IMR-90 (cell line): ENCODE measurements at regions of chr13 and their contacts with region 1.

Region 1: GRCh38 chr13:97855570-97856303 is 97.7 kb upstream of the IPO5 start:
- DNase-seq: peak; percentile 86
- ATAC-seq: peak; percentile 88
- H3K4me3 ChIP-seq: no peak overlapping the region
- H3K27ac ChIP-seq: no peak overlapping the region
- H3K4me1 ChIP-seq: peaks cover 6% of the 10 kb centered on the region
- H3K27me3 ChIP-seq: no peaks in the 10 kb centered on the region
- CTCF ChIP-seq: peak; percentile 89
- POLR2A ChIP-seq: peak; percentile 39; the same call in 1 of the 2 replicates
- RAD21 ChIP-seq: peak; percentile 99

Region 2: DNA sequence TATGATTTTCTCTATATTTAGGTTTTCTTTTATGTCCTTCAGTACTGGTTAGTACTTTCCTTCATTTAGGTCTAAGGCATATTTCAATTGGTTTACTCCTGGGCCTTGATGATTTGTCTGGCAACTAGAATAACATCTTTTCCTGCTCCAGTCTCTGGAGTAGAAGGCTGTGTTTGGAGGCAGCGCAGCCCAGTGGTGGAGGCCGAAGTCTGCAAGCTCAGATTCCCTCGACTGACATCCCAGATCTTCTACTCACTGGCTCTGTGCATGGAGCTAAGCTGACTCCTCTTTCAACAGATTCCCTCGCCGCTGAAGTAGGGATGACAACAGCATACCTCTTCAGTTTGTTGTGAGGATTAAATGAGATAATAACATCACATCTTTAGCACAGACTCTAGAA is 280.8 kb before region 1 on chr13:
- CTCF ChIA-PET with region 1: no interaction called
- POLR2A ChIA-PET with region 1: no interaction called
- dilution Hi-C with region 1: no loop called
- in situ Hi-C with region 1: no loop called
- intact Hi-C with region 1: no loop called
- DNase-seq: peak; percentile 52
- ATAC-seq: peak; percentile 80
- H3K4me3 ChIP-seq: no peak overlapping the region
- H3K27ac ChIP-seq: no peak overlapping the region
- H3K4me1 ChIP-seq: peaks cover 2% of the 10 kb centered on the region; the same call in 1 of the 2 replicates
- H3K27me3 ChIP-seq: peaks cover 2% of the 10 kb centered on the region; the same call in 1 of the 2 replicates
- CTCF ChIP-seq: peak; percentile 55
- POLR2A ChIP-seq: no peak
- RAD21 ChIP-seq: peak; percentile 64

Region 3: GRCh38 chr13:97786510-97786909 is 69.2 kb before region 1 on chr13:
- CTCF ChIA-PET with region 1: no interaction called
- POLR2A ChIA-PET with region 1: no interaction called
- dilution Hi-C with region 1: no loop called
- in situ Hi-C with region 1: no loop called
- intact Hi-C with region 1: no loop called
- DNase-seq: no peak
- ATAC-seq: no peak
- H3K4me3 ChIP-seq: no peak overlapping the region
- H3K27ac ChIP-seq: no peak overlapping the region
- H3K4me1 ChIP-seq: no peaks in the 10 kb centered on the region
- H3K27me3 ChIP-seq: peaks cover 4% of the 10 kb centered on the region; the same call in 1 of the 2 replicates
- CTCF ChIP-seq: no peak
- POLR2A ChIP-seq: no peak
- RAD21 ChIP-seq: no peak

Region 4: GRCh38 chr13:97975848-97976609 is 120.3 kb after region 1 on chr13:
- CTCF ChIA-PET with region 1: interaction called, 4 read pairs
- POLR2A ChIA-PET with region 1: no interaction called
- dilution Hi-C with region 1: no loop called
- in situ Hi-C with region 1: no loop called
- intact Hi-C with region 1: loop called (anchors 1 kb)
- DNase-seq: peak; percentile 79
- ATAC-seq: peak; percentile 96
- H3K4me3 ChIP-seq: peak overlapping the region; percentile 98
- H3K27ac ChIP-seq: peak overlapping the region; percentile 64
- H3K4me1 ChIP-seq: peaks cover 4% of the 10 kb centered on the region; the same call in 1 of the 2 replicates
- H3K27me3 ChIP-seq: no peaks in the 10 kb centered on the region
- CTCF ChIP-seq: no peak
- POLR2A ChIP-seq: peak; percentile 85
- RAD21 ChIP-seq: no peak

Region 5: DNA sequence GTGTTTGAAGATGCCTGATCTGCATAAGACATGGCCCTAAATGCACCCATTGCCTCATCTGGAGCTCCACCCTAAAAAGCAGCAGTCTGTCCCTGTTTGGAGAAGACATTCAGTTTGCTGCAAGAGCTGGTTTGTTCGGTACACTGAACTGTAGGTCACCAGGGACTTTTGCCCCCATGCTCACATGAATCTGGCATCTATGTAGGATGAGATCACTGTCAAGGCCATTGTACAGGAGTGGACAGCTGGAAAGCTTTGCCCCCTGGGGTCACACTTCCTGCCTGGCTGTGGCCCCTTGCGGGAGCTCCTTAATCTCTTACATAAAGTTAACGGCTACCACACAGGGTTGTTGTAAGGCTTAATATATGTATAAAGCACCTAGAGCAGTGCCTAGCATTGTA is 170.7 kb after region 1 on chr13:
- CTCF ChIA-PET with region 1: no interaction called
- POLR2A ChIA-PET with region 1: no interaction called
- dilution Hi-C with region 1: no loop called
- in situ Hi-C with region 1: no loop called
- intact Hi-C with region 1: loop called (anchors 5 kb)
- DNase-seq: peak; percentile 40
- ATAC-seq: peak; percentile 8; the same call in 1 of the 2 replicates
- H3K4me3 ChIP-seq: no peak overlapping the region
- H3K27ac ChIP-seq: no peak overlapping the region
- H3K4me1 ChIP-seq: peaks cover 11% of the 10 kb centered on the region
- H3K27me3 ChIP-seq: no peaks in the 10 kb centered on the region
- CTCF ChIP-seq: no peak
- POLR2A ChIP-seq: no peak
- RAD21 ChIP-seq: no peak

Region 6: DNA sequence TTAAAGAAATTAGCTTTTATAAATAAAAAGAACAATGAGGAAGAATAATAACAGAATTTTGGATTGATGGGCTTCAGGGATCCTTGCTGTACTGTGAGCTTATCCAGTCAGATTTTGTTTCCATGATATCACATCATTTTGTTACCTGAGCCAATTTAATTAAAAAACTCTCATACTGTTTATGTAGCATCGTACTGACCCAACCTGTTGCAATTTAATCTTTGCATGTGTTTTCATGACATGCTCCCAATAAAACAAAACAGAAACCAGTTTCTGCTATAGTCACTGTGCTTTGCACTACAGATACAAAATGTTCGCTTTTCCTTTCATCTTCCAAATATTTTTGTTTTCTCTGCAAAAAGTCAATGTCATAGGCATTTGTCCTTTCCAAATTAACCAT is 431.1 kb after region 1 on chr13:
- CTCF ChIA-PET with region 1: no interaction called
- POLR2A ChIA-PET with region 1: no interaction called
- dilution Hi-C with region 1: no loop called
- in situ Hi-C with region 1: no loop called
- intact Hi-C with region 1: no loop called
- DNase-seq: no peak
- ATAC-seq: no peak
- H3K4me3 ChIP-seq: no peak overlapping the region
- H3K27ac ChIP-seq: no peak overlapping the region
- H3K4me1 ChIP-seq: peaks cover 6% of the 10 kb centered on the region; the same call in 1 of the 2 replicates
- H3K27me3 ChIP-seq: no peaks in the 10 kb centered on the region
- CTCF ChIP-seq: no peak
- POLR2A ChIP-seq: no peak
- RAD21 ChIP-seq: no peak

Region 7: DNA sequence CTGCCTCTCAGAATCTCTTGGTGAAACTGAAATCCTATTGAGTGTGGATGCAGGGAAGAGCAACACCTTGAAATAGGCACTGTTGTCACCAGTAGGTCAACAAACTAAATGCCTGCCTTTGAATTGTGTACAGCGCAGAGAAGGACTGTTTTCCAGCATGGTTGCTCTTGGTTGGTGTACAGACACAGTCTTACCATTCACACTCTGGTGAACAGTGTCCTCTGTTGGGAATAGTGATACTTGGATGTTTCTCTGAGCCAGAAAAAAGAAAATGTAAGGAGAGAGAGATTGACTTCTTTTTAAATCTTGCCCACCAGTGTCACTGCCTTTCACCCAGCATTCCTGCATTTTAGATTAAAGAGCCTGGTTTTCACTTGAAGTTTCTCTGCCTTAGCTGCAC is 541.5 kb after region 1 on chr13:
- CTCF ChIA-PET with region 1: no interaction called
- POLR2A ChIA-PET with region 1: no interaction called
- dilution Hi-C with region 1: no loop called
- in situ Hi-C with region 1: no loop called
- intact Hi-C with region 1: loop called (anchors 10 kb)
- DNase-seq: peak; percentile 40
- ATAC-seq: peak; percentile 46; the same call in 1 of the 2 replicates
- H3K4me3 ChIP-seq: no peak overlapping the region
- H3K27ac ChIP-seq: no peak overlapping the region
- H3K4me1 ChIP-seq: peaks cover 6% of the 10 kb centered on the region
- H3K27me3 ChIP-seq: no peaks in the 10 kb centered on the region
- CTCF ChIP-seq: peak; percentile 43
- POLR2A ChIP-seq: no peak
- RAD21 ChIP-seq: peak; percentile 51

Region 8: DNA sequence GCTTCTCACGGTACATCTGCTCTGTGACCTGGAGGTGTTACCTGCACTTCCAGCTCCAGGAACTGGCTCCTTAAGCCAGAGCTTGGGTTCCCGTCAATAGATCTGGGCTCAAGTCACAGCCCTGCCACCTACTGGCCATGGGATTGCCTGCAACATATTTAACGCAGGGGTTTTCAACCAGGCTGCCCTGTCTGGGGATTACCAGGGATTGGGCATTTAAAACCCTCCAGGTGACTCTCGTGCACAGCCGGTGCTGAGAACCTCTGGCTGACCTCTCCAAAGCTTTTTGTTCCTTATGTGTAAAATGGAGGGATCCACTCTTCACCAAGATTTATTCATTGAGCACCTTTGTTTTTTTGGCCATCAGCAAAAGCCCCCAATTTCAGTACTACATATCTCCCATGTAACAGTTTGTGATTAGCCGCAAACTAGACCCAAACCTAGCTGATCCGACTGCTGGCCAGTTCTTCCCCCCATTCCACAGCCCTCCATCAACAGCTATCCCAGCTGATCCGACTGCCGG is 797.8 kb after region 1 on chr13:
- CTCF ChIA-PET with region 1: no interaction called
- POLR2A ChIA-PET with region 1: no interaction called
- dilution Hi-C with region 1: no loop called
- in situ Hi-C with region 1: loop called (anchors 25 kb)
- intact Hi-C with region 1: no loop called
- DNase-seq: peak; percentile 71
- ATAC-seq: peak; percentile 100
- H3K4me3 ChIP-seq: no peak overlapping the region
- H3K27ac ChIP-seq: no peak overlapping the region
- H3K4me1 ChIP-seq: no peaks in the 10 kb centered on the region
- H3K27me3 ChIP-seq: peaks cover 2% of the 10 kb centered on the region; the same call in 1 of the 2 replicates
- CTCF ChIP-seq: peak; percentile 87
- POLR2A ChIP-seq: no peak
- RAD21 ChIP-seq: peak; percentile 85